PC-3 (cell line): ENCODE measurements at regions of chrX and their contacts with region 1.

Region 1: DNA sequence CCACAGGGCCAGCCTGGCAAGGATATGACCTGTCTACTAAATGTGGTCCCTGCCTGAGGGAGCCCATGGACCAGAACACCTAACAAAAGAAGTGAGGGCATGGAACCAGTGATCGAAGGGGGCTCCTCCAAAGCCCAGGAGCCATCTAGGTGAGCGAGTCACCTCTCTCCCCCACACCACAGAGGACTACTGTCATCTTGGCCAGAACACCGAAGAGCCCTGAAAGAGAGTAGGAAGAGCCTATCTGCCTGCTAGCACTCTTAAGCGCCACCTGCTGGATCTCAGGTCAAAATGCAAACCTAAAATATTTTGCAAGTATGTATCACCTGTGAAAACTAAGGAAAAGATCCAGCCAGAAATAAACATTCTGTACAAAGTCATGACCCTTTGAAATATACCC is 137.9 kb upstream of the ZXDB start:
- DNase-seq: peak; percentile 49
- ATAC-seq: peak; percentile 54
- H3K4me3 ChIP-seq: no peak overlapping the region
- H3K27ac ChIP-seq: no peak overlapping the region
- H3K4me1 ChIP-seq: peaks cover 8% of the 10 kb centered on the region; the same call in 1 of the 2 replicates
- H3K27me3 ChIP-seq: no peaks in the 10 kb centered on the region
- CTCF ChIP-seq: peak; percentile 74

Region 2: DNA sequence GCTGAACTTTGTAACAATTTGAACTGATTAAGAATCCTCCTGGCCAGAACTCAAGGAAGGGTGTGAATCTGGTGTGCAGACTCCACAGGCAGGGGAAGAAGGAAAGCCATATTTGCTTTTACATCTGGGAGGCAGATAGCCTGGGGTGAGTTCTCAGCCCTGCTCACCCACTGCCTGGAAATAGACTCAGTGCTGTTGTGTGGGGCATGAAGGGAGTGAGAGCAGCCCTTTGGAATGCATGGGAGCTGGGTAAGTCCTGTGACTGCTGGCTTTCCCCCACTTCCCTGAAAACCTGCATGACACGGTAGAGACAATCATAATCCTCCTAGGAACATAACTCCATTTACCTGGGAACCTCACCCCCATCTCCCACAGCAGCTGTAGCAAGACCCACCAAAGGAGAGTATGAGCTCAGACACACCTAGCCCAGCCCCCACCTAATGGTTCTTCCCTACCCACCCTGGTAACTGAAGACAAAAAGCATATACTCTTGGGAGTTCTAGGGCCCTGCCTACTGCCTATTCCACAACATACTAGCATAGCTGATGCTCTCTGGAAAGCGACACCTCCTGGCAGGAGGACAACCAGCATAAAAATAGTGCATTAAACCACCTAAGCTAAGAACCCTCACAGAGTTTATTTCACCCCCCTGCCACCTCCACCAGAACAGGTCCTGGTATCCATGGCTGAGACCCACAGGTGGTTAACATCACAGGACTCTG is 949.8 kb before region 1 on chrX:
- CTCF ChIA-PET with region 1: no interaction called
- POLR2A ChIA-PET with region 1: no interaction called
- intact Hi-C with region 1: no loop called
- DNase-seq: peak; percentile 85
- ATAC-seq: peak; percentile 79
- H3K4me3 ChIP-seq: peak overlapping the region; percentile 23; the same call in 1 of the 2 replicates
- H3K27ac ChIP-seq: peak overlapping the region; percentile 98
- H3K4me1 ChIP-seq: peaks cover 50% of the 10 kb centered on the region
- H3K27me3 ChIP-seq: no peaks in the 10 kb centered on the region
- CTCF ChIP-seq: peak; percentile 44; the same call in 1 of the 2 replicates

Region 3: GRCh38 chrX:56802921-56803849 is 650.7 kb before region 1 on chrX:
- CTCF ChIA-PET with region 1: no interaction called
- POLR2A ChIA-PET with region 1: no interaction called
- intact Hi-C with region 1: loop called (anchors 10 kb)
- DNase-seq: peak; percentile 73
- ATAC-seq: peak; percentile 85
- H3K4me3 ChIP-seq: no peak overlapping the region
- H3K27ac ChIP-seq: no peak overlapping the region
- H3K4me1 ChIP-seq: no peaks in the 10 kb centered on the region
- H3K27me3 ChIP-seq: no peaks in the 10 kb centered on the region
- CTCF ChIP-seq: peak; percentile 75

Region 4: DNA sequence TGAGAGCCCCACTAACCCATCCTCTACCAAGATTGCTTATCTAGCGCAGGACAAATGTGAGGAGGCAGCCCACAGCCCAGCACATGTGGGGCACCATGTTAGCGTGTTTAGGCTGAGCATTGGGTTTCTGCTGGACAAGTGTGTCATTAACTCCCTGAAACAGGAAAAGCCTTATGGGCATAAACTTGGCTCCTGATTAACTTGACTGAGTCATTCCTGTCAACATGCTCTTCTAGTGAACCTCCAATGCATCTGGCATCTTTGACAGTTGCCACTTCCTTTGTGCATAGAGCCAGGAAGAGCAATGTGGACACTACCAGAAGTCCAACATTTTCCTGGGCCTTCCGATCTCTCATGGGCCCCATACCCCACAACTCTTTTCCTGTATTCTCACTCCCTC is 319.2 kb before region 1 on chrX:
- CTCF ChIA-PET with region 1: no interaction called
- POLR2A ChIA-PET with region 1: no interaction called
- intact Hi-C with region 1: no loop called
- DNase-seq: peak; percentile 72
- ATAC-seq: peak; percentile 80
- H3K4me3 ChIP-seq: no peak overlapping the region
- H3K27ac ChIP-seq: no peak overlapping the region
- H3K4me1 ChIP-seq: peaks cover 16% of the 10 kb centered on the region
- H3K27me3 ChIP-seq: no peaks in the 10 kb centered on the region
- CTCF ChIP-seq: no peak

Region 5: DNA sequence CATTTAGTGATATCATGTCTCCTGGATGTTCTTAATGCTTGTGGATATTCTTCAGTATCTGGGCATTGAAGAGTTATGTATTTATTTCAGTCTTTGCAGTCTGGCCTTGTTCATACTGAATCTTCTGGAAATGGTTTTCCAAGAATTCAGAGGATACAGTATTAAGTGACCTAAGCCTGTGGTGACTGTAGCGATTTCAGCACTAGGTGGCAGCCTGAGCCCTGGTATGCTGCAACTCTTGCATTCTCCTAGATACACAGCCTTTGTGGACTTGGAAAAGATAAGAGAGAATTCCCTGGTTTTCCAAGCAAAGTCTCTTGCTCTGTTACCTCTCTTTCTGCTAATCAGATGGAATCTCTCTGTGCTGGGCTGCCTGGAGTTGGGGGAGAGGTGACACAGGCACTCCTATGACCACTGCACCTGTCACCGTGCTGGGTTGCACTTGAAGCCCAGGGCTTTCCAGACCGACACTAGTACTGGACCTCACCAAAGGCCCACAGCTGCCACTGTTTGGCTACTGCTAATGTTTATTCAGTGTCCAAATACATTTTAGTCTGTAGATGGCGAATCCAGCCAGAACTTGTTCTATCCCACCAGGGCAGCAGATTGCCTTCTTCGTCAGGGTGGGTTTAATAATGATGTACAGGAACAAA is 297.4 kb before region 1 on chrX:
- CTCF ChIA-PET with region 1: no interaction called
- POLR2A ChIA-PET with region 1: no interaction called
- intact Hi-C with region 1: loop called (anchors 1 kb)
- DNase-seq: peak; percentile 59
- ATAC-seq: peak; percentile 95
- H3K4me3 ChIP-seq: no peak overlapping the region
- H3K27ac ChIP-seq: no peak overlapping the region
- H3K4me1 ChIP-seq: no peaks in the 10 kb centered on the region
- H3K27me3 ChIP-seq: no peaks in the 10 kb centered on the region
- CTCF ChIP-seq: peak; percentile 73

Region 6: DNA sequence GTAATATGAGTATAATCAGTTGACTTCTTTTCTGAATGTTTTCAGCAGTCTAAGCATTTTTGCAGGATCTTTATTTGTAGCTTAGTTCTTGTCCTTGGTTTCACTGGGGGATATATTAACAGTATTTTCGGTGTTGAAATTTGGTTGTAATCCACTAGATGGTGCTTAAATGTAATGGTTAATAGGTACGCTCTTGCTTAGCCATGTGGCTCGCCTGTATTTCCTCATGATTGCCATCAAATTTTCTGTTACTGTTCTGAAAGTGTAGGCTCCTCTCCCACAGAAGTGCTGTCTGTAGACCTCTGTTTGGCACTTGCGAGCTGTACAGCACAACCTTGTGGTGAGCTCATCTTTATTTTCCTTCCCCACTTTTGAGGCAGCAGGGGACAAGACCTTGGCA is 171.3 kb before region 1 on chrX:
- CTCF ChIA-PET with region 1: interaction called, 4 read pairs
- POLR2A ChIA-PET with region 1: no interaction called
- intact Hi-C with region 1: loop called (anchors 1 kb)
- DNase-seq: peak; percentile 52
- ATAC-seq: peak; percentile 18
- H3K4me3 ChIP-seq: no peak overlapping the region
- H3K27ac ChIP-seq: no peak overlapping the region
- H3K4me1 ChIP-seq: peaks cover 6% of the 10 kb centered on the region; the same call in 1 of the 2 replicates
- H3K27me3 ChIP-seq: no peaks in the 10 kb centered on the region
- CTCF ChIP-seq: peak; percentile 51